HEK293T (cell line): ENCODE measurements at regions of chr12 and their contacts with region 1.

Region 1: DNA sequence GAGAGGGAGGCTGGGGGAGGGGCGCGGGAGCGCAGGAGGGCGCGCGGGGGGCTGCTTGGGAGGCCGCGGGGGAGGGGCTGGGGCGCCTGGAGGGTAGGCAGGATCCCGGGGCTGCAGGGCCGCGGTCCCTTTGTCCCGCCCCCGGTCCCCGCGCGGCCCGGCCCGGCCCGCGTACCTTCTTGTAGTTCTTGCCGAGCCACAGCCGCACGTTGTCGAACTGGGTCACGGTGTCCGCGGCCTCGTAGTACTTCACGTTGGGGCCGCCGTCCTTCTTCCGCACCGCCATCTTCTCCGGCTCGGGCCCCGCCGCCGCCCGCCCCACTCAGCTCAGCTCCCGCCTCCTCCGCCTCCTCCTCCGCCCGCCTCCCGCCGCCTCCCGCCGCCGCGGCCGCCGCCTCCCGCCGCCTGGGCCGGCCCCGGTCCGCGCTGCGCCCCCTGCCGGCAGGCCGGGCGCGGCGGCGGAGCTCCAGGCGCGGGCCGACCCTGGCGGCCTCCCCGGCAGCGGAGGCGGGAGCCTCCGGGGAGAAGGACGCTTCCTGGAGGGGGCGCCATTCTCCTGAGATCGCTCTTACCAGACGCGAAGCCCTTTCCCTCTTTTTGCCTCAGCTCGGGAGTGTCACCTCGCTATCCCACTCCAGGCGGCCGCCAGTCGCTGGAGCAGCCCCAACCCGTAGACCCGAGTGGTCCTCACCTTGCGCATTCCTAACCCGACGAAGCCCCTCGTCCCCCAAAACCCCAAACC is at the start of gene SMARCC2:
- DNase-seq: peak; percentile 91

Region 2: DNA sequence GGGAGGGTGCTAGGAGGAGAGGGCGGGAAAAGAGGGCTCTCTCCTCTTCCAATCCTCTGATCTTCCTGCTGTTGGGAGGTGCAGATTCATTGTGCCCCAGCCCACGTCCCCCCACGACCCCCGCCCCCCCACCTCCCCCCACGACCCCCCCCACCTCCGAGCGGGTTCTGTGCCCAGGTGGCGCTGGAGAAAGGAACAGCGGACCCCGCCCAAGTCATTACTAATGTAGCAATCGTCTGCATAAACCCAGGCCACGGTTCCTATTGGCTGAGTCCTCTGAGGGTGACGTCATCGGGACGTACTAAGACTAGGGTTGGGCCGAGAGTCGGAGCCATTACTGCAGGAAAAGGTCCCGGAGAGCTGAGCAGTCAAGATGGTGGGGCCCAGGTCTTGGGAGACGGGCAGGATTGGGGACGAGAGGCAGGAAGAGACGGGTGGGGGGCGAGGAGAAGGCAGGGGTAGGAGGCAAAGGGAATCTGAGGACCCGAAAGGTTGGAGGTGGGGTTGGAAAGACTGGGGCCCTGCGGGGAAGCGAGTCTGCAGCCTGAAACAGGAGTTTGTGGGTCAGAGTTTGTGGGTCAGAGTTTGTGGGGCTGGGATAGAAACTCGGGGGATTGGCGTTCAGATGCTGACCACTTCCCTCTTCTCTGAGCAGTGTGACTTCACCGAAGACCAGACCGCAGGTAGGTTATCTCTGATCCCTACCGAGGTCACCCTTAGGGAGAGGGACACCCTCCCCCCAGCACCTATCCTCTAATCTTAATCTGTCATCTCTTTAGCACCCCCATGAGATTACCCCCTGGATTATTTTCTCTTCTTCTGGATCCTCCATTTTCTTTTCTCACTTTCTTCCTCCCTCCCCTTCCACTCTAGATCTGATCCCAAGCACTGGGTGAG is 31.1 kb before region 1 on chr12 and contains the start of gene MYL6:
- CTCF ChIA-PET with region 1: no interaction called
- POLR2A ChIA-PET with region 1: interaction called, 10 read pairs
- DNase-seq: peak; percentile 90

Region 3: GRCh38 chr12:56206457-56207166 is 17.3 kb after region 1 on chr12:
- CTCF ChIA-PET with region 1: interaction called, 11 read pairs
- POLR2A ChIA-PET with region 1: interaction called, 9 read pairs
- DNase-seq: peak; percentile 68